ENCODE measurements at regions of chr2 and their contacts with region 1.

Region 1: DNA sequence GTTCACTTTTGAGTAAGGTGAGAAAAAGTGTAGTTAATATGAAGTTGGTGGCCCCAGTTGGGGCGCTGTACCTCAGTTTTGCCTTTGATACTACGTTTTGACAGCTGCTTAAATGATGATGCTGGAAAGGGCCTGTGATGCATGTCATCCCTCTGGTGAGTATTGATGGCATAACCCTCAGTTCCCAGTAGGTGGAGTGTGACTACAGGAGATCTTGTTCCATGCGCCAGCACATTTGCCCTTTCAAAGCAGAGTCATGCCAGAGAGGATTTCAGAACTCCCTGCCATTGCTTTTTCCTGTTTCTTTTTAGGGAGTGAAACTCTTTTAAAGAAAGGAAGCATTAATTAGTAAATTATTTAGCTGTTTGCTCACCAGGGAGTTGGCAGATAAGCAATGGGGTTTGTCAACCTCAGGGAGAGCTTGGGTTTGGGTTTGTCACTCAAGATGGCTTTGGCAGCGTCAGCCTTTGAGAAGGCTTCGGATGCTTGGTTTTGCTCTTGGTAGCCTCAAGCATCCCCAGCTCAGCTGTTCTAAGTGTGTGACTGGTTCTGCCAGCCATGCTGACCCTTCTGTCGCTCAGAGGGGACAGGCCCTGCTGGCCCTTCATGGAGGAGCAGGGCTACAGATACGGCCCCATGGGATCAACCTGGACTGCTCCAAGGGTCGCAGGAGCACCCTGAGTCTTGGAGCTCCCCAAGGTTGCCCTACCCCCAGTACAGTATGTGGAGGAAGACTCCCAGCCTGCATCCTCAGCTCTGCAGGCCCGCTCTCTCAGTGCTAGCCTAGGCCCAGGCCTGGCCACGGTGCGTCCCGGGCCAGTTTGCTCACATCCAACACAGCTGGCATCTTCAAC is 29.1 kb downstream of the ARMC9 start:
- DNase-seq: peak; percentile 53
- H3K4me3 ChIP-seq: no peak overlapping the region
- H3K27ac ChIP-seq: peak overlapping the region; percentile 30 to 44
- H3K4me1 ChIP-seq: no peaks in the 10 kb centered on the region
- H3K27me3 ChIP-seq: no peaks in the 10 kb centered on the region
- CTCF ChIP-seq: peak; percentile 32 to 82 (median 70)
- POLR2A ChIP-seq: no peak

Region 2: GRCh38 chr2:231104115-231104713 is 123.3 kb before region 1 on chr2:
- intact Hi-C with region 1: no loop called
- DNase-seq: peak; percentile 33
- H3K4me3 ChIP-seq: no peak overlapping the region
- H3K27ac ChIP-seq: no peak overlapping the region
- H3K4me1 ChIP-seq: no peaks in the 10 kb centered on the region
- H3K27me3 ChIP-seq: no peaks in the 10 kb centered on the region
- CTCF ChIP-seq: peak in 3 of 4 experiments; percentile 65 to 84 (median 81)
- POLR2A ChIP-seq: no peak

Region 3: DNA sequence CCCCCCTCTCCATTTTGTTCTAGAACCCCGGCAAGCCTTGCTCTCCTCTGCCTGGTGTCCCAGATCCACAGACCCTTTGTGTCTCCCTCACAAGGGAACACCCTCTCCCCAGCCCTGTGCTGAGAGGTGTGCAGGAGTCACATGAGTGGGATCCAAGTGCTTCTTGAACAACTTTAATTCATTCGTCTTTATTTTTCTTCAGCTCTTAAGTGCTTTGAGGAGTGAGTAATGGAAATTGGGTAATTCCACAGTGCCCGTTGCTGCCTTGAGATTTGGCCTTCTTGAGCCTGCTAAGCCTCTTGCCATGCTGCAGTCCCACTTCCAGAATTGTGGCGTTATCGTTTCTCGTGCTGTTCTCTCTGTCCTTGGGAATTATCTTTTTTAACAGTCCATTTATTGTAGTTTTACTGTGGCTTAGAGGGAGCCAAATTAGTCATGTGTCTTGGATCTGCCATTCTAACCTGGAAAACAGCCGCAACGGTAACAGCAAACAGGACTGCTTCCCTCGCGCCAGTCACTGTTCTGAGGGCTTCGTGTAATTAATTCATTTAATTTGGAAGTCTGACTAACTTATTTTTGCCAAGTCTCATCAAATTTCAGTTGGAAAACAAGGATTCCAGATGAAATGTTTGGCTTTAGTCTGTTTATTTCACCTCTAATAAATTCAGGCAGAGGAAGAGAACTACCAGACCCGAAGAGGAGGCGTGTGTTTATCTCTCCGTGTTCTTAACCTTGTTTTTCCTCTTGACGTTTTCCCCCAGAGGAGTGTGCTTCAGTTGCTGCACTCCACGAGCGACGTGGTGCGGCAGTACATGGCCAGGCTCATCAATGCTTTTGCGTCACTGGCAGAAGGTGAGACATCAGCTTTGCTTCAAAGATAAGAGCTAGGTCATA is 42.9 kb after region 1 on chr2:
- intact Hi-C with region 1: loop called (anchors 5 kb)
- DNase-seq: no peak
- H3K4me3 ChIP-seq: no peak overlapping the region
- H3K27ac ChIP-seq: peak overlapping the region; percentile 36 to 56
- H3K4me1 ChIP-seq: no peaks in the 10 kb centered on the region
- H3K27me3 ChIP-seq: no peaks in the 10 kb centered on the region
- CTCF ChIP-seq: no peak
- POLR2A ChIP-seq: no peak

Region 4: GRCh38 chr2:231411831-231412617 is 184.5 kb after region 1 on chr2:
- intact Hi-C with region 1: loop called (anchors 2 kb)
- DNase-seq: peak; percentile 77
- H3K4me3 ChIP-seq: peak overlapping the region; percentile 49 to 52
- H3K27ac ChIP-seq: peak overlapping the region; percentile 29 to 60
- H3K4me1 ChIP-seq: no peaks in the 10 kb centered on the region
- H3K27me3 ChIP-seq: no peaks in the 10 kb centered on the region
- CTCF ChIP-seq: peak; percentile 50 to 85 (median 78)
- POLR2A ChIP-seq: no peak

Region 5: DNA sequence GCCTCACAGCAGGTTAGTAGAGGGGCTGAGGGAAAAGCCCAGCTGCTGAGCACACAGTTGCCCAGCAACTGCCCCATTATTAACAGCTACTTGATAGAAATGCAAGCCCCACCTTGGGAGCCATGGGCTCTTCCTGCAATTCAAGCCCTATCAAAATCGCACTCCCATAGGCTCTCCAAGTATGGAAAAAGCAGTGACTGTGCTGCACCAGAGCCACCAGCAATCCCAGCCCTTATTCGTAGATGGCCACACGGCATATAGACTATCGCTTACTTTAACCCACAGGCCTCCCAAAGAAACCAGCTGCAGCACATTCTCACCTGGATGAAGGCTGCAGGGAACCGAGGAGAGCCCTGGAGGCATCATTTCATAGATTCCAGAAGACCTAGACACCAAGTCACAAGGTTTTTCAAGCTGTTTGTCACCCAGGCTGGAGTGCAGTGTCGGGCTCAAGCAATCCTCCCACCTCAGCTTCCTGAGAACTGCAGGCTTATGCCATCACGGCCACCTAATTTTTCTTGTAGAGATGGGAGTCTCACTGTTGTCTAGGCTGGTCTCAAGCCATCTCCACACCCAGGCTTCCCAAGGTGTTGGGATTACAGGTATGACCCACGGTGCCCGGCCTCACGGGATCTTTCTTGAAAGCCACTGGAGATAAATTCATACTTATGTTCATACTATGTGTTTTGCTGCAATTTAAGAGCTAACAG is 225.4 kb after region 1 on chr2:
- intact Hi-C with region 1: loop called (anchors 5 kb)
- DNase-seq: no peak
- H3K4me3 ChIP-seq: no peak overlapping the region
- H3K27ac ChIP-seq: no peak overlapping the region
- H3K4me1 ChIP-seq: no peaks in the 10 kb centered on the region
- H3K27me3 ChIP-seq: no peaks in the 10 kb centered on the region
- CTCF ChIP-seq: no peak
- POLR2A ChIP-seq: no peak

Region 6: DNA sequence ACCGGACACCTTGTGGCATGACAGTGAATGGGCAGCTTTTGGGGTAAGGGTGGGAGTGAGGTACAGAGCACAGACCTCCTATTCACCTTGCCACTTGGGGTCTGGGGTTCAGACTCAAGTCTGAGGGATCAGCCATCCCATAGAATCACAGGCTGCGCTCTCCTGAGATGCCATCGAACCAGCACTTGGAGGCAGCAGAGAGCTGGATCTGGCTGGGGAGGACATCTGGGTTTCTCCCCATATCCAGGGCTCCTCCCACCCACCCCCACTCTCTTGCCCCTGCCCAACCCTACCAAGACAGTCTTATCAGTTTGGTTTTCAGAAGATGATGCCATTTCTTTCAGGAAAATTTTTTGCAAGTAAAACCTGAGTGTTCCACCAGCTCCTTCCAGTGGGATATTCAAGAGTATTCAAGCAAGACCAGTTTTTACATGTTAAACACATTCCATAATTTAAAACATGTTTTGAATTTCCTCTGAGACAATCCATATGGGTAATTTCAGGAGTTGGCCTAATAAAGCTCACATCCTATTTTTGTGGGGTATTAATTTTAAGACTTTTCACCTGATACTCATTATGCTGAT is 335.9 kb after region 1 on chr2:
- intact Hi-C with region 1: no loop called
- DNase-seq: no peak
- H3K4me3 ChIP-seq: no peak overlapping the region
- H3K27ac ChIP-seq: no peak overlapping the region
- H3K4me1 ChIP-seq: no peaks in the 10 kb centered on the region
- H3K27me3 ChIP-seq: no peaks in the 10 kb centered on the region
- CTCF ChIP-seq: peak in 3 of 4 experiments; percentile 25 to 53 (median 28)
- POLR2A ChIP-seq: no peak

Measured in prostate gland (tissue), 2 donors.